Sigmoid colon (tissue), 7 donors: ENCODE measurements at regions of chr1 and their contacts with region 1.

Region 1: GRCh38 chr1:85464497-85465098 is 361 bp downstream of the DDAH1 start:
- DNase-seq: peak; percentile 81
- H3K4me3 ChIP-seq: peak overlapping the region; percentile 53 to 79 (median 72)
- H3K27ac ChIP-seq: peak overlapping the region; percentile 67 to 83 (median 76)
- H3K4me1 ChIP-seq: peaks cover 0 to 35% (median 27%) of the 10 kb centered on the region in 4 donors
- H3K27me3 ChIP-seq: no peaks in the 10 kb centered on the region
- CTCF ChIP-seq: no peak
- EP300 ChIP-seq: no peak
- POLR2A ChIP-seq: no peak

Region 2: DNA sequence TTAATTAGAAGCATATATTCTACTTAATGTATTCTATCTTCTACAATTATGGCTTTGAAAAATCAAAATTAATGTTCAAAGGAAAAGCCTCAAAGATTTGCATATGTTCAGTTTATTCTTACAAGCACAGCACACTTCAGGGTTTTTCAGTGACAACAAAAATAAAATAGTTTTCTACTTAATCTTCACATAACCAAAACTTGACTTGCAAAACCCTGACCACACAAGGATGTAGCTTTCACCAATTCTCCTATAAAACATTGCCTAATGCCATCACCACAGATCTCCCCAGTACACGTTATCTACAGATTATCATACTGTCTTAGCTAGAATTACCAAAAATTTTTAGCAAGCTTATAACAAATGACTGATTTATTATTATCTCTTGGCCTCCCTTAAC is 594.9 kb before region 1 on chr1:
- intact Hi-C with region 1: no loop called
- DNase-seq: no peak
- H3K4me3 ChIP-seq: no peak overlapping the region
- H3K27ac ChIP-seq: no peak overlapping the region
- H3K4me1 ChIP-seq: no peaks in the 10 kb centered on the region
- H3K27me3 ChIP-seq: no peaks in the 10 kb centered on the region
- CTCF ChIP-seq: no peak
- EP300 ChIP-seq: no peak
- POLR2A ChIP-seq: no peak

Region 3: DNA sequence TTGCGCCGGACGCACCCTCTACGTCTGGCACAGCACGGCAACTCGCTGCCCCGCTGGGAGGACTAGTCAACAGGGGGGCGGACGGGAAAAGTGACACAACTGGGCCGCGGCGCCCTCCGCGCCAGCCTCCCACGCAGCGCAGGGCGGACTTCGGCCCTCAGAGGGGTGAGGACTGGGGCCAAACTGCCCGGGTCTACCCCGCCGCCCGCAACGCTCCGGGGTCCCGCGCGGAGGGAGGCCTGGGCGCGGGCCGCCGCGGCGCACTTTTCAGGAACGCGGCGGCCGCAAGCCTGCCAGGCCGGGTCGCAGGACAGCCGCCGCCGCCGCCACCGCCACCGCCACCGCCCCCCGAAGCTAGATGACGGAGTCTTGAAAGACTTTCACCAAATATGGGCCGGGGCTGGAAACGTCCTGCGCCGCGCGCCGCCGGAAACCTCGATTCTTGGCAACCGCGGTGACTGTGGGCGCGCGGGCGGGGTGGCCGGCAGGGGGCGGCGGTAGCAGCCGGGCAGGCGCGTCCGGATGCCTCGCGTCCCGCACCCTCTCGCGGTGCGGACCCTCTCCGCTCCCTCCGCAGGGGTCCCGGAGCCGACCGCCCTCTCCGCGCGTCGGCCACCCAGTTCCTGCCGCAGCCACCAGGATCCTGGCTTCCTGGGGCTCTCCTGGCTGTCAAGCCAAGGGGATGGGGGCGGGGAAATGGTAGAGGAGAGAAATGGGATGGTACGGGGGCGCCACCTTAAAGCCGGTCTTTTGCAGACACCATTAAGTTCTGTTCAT is 112.2 kb after region 1 on chr1:
- intact Hi-C with region 1: loop called (anchors 2 kb)
- DNase-seq: peak; percentile 96
- H3K4me3 ChIP-seq: peak overlapping the region; percentile 67 to 84 (median 75)
- H3K27ac ChIP-seq: peak overlapping the region; percentile 96 to 99 (median 98)
- H3K4me1 ChIP-seq: peaks cover 0 to 42% (median 31%) of the 10 kb centered on the region in 4 donors
- H3K27me3 ChIP-seq: no peaks in the 10 kb centered on the region
- CTCF ChIP-seq: peak in 3 of 4 experiments; percentile 17 to 88 (median 85)
- EP300 ChIP-seq: peak in 1 of 4 donors; percentile 36
- POLR2A ChIP-seq: peak; percentile 40 to 77